A549 (cell line): ENCODE measurements at regions of chr10 and their contacts with region 1.

Region 1: DNA sequence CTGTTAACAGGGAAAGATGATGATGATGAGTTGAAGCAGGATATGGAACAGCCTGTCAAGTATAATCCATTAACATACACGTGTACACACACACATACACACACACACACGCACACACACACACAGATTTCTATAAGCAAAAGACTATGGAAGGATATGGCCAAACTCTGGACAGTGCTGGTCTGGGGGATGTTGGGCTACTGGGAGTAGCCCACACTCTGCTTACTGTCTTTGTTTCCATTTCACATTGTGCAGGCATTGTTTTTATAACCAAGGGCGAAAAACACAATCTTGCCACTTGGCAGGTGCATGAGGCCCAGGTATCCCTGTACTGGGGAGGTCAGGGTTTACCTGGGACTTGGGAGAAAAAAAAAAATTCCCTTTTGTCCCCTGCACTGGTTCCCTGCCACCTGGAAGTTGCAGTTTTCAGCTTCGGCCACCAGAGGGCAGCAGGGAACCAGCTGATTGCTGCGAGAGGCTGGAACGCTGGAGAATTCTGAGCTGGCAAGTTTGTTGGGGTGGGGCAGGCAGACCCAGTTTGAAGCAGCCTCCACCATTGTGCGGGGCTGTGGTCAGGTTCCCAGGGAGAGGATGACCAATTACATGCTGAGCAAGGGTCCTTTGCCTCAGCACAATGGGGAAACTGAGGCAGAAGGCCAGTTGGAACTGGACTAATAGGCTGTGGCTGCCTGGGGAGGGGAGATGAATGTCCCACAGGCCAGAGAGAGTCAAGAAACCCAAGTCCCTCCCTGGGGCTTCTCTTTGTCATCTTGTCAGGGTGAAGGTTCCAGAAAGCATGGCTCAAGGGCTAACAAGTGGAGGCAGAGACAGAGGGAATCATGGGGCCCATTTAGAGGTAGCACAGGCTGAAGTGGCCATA is 27.3 kb downstream of the PPIF start:
- DNase-seq: peak; percentile 62 to 85
- ATAC-seq: peak; percentile 77 to 92
- H3K4me3 ChIP-seq: no peak overlapping the region
- H3K27ac ChIP-seq: no peak overlapping the region; a peak in 1 of 6 replicates
- H3K4me1 ChIP-seq: peaks cover 5% of the 10 kb centered on the region; the same call in 1 of the 3 replicates
- CTCF ChIP-seq: peak; percentile 90
- EP300 ChIP-seq: no peak
- POLR2A ChIP-seq: no peak
- RAD21 ChIP-seq: peak; percentile 94 to 97

Region 2: DNA sequence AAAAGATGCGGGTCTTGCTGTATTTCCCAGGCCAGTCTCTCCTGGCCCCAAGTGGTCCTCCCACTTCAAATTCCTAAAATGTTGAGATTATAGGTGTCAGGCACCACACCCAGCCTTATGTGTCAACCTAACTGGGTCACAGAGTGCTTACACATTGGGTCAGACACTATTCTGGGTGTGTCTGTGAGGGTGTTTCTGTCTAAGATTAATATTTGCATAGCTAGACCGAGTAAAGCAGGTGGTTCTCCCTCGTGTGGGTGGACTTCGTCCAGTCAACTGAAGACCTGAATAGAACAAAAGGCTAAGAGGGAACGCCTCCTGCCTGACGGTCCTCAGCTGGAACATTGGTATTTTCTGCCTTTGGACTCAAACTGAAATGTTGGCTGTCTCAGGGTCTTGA is 15.8 kb before region 1 on chr10:
- CTCF ChIA-PET with region 1: interaction called, 30 read pairs
- POLR2A ChIA-PET with region 1: no interaction called
- DNase-seq: no peak
- ATAC-seq: no peak
- H3K4me3 ChIP-seq: no peak overlapping the region
- H3K27ac ChIP-seq: no peak overlapping the region
- H3K4me1 ChIP-seq: no peaks in the 10 kb centered on the region
- CTCF ChIP-seq: no peak
- EP300 ChIP-seq: no peak
- POLR2A ChIP-seq: no peak
- RAD21 ChIP-seq: no peak

Region 3: GRCh38 chr10:79400146-79401004 is 25.8 kb after region 1 on chr10:
- CTCF ChIA-PET with region 1: interaction called, 15 read pairs
- POLR2A ChIA-PET with region 1: no interaction called
- DNase-seq: peak; percentile 35 to 65
- ATAC-seq: peak; percentile 54 to 88; a peak in 5 of 6 replicates
- H3K4me3 ChIP-seq: no peak overlapping the region
- H3K27ac ChIP-seq: no peak overlapping the region
- H3K4me1 ChIP-seq: no peaks in the 10 kb centered on the region
- CTCF ChIP-seq: peak; percentile 53
- EP300 ChIP-seq: no peak
- POLR2A ChIP-seq: no peak
- RAD21 ChIP-seq: peak; percentile 40 to 71; a peak in 3 of 5 replicates

Region 4: GRCh38 chr10:79454259-79454658 is 79.7 kb after region 1 on chr10:
- CTCF ChIA-PET with region 1: interaction called, 22 read pairs
- POLR2A ChIA-PET with region 1: no interaction called
- DNase-seq: no peak
- ATAC-seq: no peak
- H3K4me3 ChIP-seq: no peak overlapping the region
- H3K27ac ChIP-seq: no peak overlapping the region
- H3K4me1 ChIP-seq: peaks cover 3% of the 10 kb centered on the region
- CTCF ChIP-seq: no peak
- EP300 ChIP-seq: no peak
- POLR2A ChIP-seq: no peak
- RAD21 ChIP-seq: no peak

Region 5: DNA sequence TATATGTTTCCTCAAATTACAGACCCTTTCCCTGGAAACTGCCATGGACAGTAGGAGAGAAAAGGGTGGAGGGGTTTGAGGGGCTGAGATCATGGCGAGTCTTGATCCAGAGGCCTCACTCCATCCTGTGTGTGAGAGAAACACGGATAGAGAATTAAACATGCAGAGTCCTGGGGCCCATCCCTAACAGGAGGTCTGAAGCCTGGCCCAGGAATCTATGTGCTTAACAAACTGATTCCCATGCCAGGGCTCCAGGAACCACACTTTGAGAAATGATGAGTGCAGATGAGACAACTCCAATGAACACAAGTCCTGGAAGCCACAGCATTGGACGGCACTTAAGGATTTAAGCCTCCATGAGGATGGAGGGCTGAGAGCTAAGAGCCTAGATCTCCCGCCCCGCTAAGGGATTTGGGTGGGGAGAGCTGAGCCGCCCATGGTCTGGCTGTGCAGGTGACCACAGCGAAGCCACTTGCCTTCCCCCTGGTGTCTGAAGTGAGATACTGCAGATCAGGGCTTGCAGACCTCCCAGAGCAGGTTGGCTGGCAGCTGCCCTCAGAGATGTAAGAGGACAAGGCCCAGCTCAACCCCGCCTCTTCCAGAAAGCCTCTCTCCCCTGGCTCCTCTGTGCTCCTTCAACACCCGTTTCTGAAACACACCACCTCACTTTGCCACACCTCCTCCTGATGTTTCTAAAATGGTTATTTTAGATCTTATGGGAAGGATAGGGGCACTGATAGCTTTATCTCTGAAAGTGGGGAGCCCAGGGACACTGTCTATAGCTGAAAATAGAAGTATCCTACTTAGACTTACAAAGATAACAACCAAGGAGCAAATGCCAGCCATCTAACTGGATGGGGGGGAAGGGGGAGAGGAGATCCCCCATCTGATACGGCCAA is 113.0 kb after region 1 on chr10:
- CTCF ChIA-PET with region 1: interaction called, 145 read pairs
- POLR2A ChIA-PET with region 1: no interaction called
- DNase-seq: peak; percentile 63 to 75
- ATAC-seq: peak; percentile 75 to 95
- H3K4me3 ChIP-seq: no peak overlapping the region
- H3K27ac ChIP-seq: peak overlapping the region; percentile 39 to 72; a peak in 5 of 6 replicates
- H3K4me1 ChIP-seq: peaks cover 12% of the 10 kb centered on the region
- CTCF ChIP-seq: peak; percentile 43; the same call in 2 of the 3 replicates
- EP300 ChIP-seq: no peak
- POLR2A ChIP-seq: no peak
- RAD21 ChIP-seq: peak; percentile 53 to 66